ENCODE measurements at regions of chr19 and their contacts with region 1.

Region 1: GRCh38 chr19:3434712-3435553 is 45.4 kb downstream of the SMIM24 start:
- DNase-seq: peak; percentile 96
- H3K4me3 Mint-ChIP-seq: peak overlapping the region; percentile 96
- H3K27ac Mint-ChIP-seq: peak overlapping the region; percentile 98
- H3K4me1 Mint-ChIP-seq: peaks cover 10% of the 10 kb centered on the region
- H3K27me3 Mint-ChIP-seq: no peaks in the 10 kb centered on the region

Region 2: DNA sequence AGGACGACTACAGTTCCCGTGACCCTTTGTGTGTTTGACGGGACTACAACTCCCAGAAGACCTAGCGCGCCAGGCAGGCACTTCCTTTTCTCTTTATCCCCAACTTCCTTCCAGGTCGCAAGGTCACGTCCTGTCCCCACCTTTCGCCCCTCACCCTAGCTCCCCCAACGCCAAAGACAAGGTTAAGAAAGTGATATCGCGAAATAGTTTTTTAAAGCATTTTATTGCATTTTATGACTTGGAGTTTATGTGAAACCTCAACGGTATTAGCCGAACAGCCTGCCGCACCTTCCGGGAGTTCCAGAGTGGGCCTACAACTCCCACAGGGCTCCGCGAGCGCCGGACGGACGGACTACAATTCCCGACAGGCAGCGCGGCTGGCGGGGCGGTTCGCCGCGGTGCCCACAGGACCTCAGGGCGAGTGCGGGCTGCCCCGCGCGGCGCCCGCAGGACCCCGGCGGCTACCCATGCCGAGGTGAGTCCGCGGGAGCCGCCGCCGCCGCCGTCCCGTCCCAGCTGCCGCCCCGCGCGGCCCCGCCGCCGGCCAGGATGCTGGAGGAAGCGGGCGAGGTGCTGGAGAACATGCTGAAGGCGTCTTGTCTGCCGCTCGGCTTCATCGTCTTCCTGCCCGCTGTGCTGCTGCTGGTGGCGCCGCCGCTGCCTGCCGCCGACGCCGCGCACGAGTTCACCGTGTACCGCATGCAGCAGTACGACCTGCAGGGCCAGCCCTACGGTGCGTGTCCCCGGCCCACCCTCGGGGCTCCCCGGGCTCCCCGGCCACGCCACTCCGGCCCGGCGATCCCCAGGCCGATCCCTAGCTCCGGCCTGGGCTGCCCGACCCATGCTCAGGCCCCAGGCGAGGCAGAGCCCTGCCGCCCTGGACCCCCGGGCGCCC is 249.2 kb before region 1 on chr19 and contains the start of gene NCLN:
- CTCF ChIA-PET with region 1: interaction called, 3 read pairs
- intact Hi-C with region 1: loop called (anchors 1 kb)
- DNase-seq: peak; percentile 95
- H3K4me3 Mint-ChIP-seq: peak within 1 kb of the TSS; percentile 98
- H3K27ac Mint-ChIP-seq: peak within 1 kb of the TSS; percentile 99
- H3K4me1 Mint-ChIP-seq: peaks cover 58% of the 10 kb centered on the region
- H3K27me3 Mint-ChIP-seq: no peaks in the 10 kb centered on the region
- total RNA-seq, gene NCLN: 38.4 to 42.9 TPM